HepG2 (cell line): ENCODE measurements at regions of chr16 and their contacts with region 1.

Region 1: GRCh38 chr16:4350787-4351659 is at the start of gene PAM16:
- DNase-seq: peak; percentile 89
- ATAC-seq: peak; percentile 83
- H3K4me3 ChIP-seq: peak within 1 kb of the TSS; percentile 92 to 100 (median 100)
- H3K27ac ChIP-seq: peak within 1 kb of the TSS; percentile 89
- H3K4me1 ChIP-seq: peaks cover 66% of the 10 kb centered on the region
- H3K27me3 ChIP-seq: no peaks in the 10 kb centered on the region; a peak in 2 of 5 replicates
- CTCF ChIP-seq: no peak; the same call in 1 of the 2 replicates
- EP300 ChIP-seq: no peak
- POLR2A ChIP-seq: peak; percentile 66 to 84
- RAD21 ChIP-seq: peak; percentile 47; the same call in 1 of the 2 replicates
- total RNA-seq, gene PAM16: 39.5 and 51.8 TPM in 2 replicates

Region 2: DNA sequence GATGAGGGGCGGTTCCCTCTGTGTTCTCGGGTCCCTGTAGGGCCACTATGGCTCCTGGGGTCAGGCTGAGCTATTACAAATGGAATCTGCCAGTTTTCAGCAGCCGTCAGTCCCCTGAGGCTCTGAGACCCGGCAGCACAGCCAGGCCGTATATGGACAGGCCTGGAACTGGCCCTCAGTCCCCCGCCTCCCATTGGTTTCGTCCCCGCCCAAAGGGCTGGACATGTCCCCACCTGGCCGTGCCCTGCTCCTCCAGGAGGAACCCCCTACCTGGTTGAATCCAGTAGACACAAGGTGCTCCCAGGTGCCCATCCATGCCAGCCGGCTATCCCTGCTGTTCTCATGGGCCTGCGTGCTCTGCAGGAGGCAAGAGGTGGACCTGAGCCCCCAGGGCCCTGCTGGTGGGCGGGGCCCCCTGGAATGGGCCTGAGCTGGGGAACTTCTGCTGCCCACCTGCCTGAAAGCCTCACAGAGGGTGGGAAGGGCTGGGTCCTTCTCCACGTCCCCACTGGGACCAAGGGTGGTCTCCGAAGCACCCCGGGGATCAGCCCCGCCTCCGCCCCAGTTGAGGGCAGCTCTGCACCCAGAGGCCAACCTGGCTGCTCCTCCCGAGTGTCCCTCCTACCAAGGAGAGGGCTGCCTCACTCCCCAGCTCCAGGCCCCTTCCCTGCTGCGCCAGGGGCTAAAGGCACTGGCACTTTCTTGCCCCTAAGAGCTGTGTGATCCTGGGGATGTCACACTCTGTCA is 37.4 kb after region 1 on chr16:
- CTCF ChIA-PET with region 1: no interaction called
- POLR2A ChIA-PET with region 1: interaction called, 3 read pairs
- in situ Hi-C with region 1: loop called (anchors 5 kb)
- intact Hi-C with region 1: no loop called
- DNase-seq: no peak
- ATAC-seq: no peak
- H3K4me3 ChIP-seq: no peak overlapping the region
- H3K27ac ChIP-seq: no peak overlapping the region
- H3K4me1 ChIP-seq: peaks cover 20% of the 10 kb centered on the region
- H3K27me3 ChIP-seq: no peaks in the 10 kb centered on the region
- CTCF ChIP-seq: no peak
- EP300 ChIP-seq: no peak
- POLR2A ChIP-seq: no peak
- RAD21 ChIP-seq: no peak